CD8-positive, alpha-beta memory T cell (primary cell): ENCODE measurements at regions of chr12 and their contacts with region 1.

Region 1: DNA sequence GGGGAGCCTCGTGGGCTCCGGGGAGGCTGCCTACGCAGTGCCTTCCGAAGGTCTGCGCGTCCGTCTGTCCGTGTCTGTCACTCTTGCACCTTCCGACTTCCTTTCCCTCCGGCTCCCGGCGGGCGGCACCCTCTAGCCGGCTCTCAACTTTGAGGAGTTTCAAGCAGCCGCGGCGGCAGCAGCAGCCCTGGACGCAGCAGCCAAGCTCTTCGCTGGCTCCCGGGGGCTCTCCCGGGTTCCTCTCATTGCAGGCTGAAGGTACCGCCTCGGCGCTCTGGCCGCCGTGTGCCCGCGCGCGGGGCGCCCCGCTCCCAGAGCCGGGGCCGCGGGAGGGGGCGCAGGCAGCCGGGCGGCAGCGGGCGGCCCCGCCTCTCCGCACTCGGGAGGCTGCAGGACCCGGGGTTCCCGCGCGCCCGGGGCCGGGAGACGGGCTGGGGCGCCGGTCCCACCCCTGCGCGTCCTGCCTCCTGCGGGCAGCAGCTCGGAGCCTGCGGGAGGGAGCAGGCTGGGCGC is at the starts of genes AMIGO2 and PCED1B:
- DNase-seq: peak; percentile 44 to 77 (median 52)
- H3K4me3 ChIP-seq: peak within 1 kb of the TSS; percentile 89
- H3K4me3 Mint-ChIP-seq: peak within 1 kb of the TSS; percentile 91 to 97 (median 95)
- H3K27ac ChIP-seq: peak within 1 kb of the TSS; percentile 83
- H3K27ac Mint-ChIP-seq: peak within 1 kb of the TSS; percentile 87 to 99 (median 97)
- H3K4me1 ChIP-seq: peaks cover 58% of the 10 kb centered on the region
- H3K4me1 Mint-ChIP-seq: peaks cover 74 to 79% (median 79%) of the 10 kb centered on the region in 3 donors
- H3K27me3 ChIP-seq: no peaks in the 10 kb centered on the region
- H3K27me3 Mint-ChIP-seq: peaks cover 0 to 5% of the 10 kb centered on the region in 2 donors
- total RNA-seq, gene AMIGO2: 16.2 to 16.6 TPM
- total RNA-seq, gene PCED1B: 52.8 to 56.9 TPM

Region 2: DNA sequence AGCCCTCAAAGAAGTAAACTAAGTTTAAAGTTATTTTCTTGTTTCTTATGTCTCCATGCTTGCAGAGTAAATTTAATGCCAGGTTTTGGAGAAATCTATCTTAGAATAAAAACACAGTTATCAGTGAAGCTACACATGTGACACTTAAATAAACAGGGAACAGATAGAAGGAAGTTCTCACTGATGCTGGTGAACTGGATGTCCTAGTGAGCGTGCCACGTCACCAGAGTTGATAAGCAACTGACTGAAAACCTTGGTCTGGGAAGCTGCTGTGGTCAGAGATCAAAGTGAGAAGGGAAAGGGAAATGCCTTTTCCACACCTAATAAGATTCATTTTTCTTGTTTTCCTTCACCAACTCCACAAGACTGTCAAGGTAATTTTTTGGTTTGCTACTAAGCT is 74.9 kb before region 1 on chr12:
- CTCF ChIA-PET with region 1: no interaction called
- POLR2A ChIA-PET with region 1: no interaction called
- DNase-seq: no peak
- H3K4me3 ChIP-seq: no peak overlapping the region
- H3K4me3 Mint-ChIP-seq: no peak overlapping the region
- H3K27ac ChIP-seq: no peak overlapping the region
- H3K27ac Mint-ChIP-seq: no peak overlapping the region
- H3K4me1 ChIP-seq: no peaks in the 10 kb centered on the region
- H3K4me1 Mint-ChIP-seq: no peaks in the 10 kb centered on the region
- H3K27me3 ChIP-seq: no peaks in the 10 kb centered on the region
- H3K27me3 Mint-ChIP-seq: peaks cover 8 to 61% of the 10 kb centered on the region in 2 donors

Region 3: GRCh38 chr12:47121146-47121545 is 41.6 kb after region 1 on chr12:
- CTCF ChIA-PET with region 1: no interaction called
- POLR2A ChIA-PET with region 1: no interaction called
- DNase-seq: no peak
- H3K4me3 ChIP-seq: no peak overlapping the region
- H3K4me3 Mint-ChIP-seq: no peak overlapping the region
- H3K27ac ChIP-seq: no peak overlapping the region
- H3K27ac Mint-ChIP-seq: no peak overlapping the region
- H3K4me1 ChIP-seq: no peaks in the 10 kb centered on the region
- H3K4me1 Mint-ChIP-seq: peaks cover 9 to 26% (median 23%) of the 10 kb centered on the region in 3 donors
- H3K27me3 ChIP-seq: no peaks in the 10 kb centered on the region
- H3K27me3 Mint-ChIP-seq: no peaks in the 10 kb centered on the region

Region 4: GRCh38 chr12:47190271-47190750 is 110.8 kb after region 1 on chr12:
- CTCF ChIA-PET with region 1: interaction called, 11 read pairs
- POLR2A ChIA-PET with region 1: interaction called, 18 read pairs
- DNase-seq: no peak
- H3K4me3 ChIP-seq: peak overlapping the region; percentile 11
- H3K4me3 Mint-ChIP-seq: peak overlapping the region; percentile 12 to 90 (median 59)
- H3K27ac ChIP-seq: no peak overlapping the region
- H3K27ac Mint-ChIP-seq: peak overlapping the region; percentile 93 to 97 (median 96)
- H3K4me1 ChIP-seq: peaks cover 81% of the 10 kb centered on the region
- H3K4me1 Mint-ChIP-seq: peaks cover 78 to 92% (median 89%) of the 10 kb centered on the region in 3 donors
- H3K27me3 ChIP-seq: no peaks in the 10 kb centered on the region
- H3K27me3 Mint-ChIP-seq: peaks cover 0 to 2% of the 10 kb centered on the region in 2 donors

Region 5: DNA sequence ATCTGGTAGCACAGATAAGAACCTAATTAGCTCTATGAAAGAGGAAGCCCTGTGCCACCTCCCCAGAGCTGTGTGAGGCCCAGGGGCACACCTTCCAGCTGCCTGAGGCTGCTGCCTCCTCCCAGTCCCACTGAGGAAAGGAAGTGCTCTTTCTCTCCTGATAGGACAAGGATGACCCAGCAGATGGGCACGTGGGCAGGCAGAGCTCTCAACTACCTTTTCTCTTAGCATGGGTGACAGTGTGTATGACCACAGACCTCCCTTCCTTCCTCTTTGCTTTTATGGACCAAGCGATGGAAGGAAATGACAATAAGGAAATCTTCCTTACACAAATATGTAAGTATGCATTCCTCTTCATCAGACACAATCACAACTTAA is 127.8 kb after region 1 on chr12:
- CTCF ChIA-PET with region 1: interaction called, 17 read pairs
- POLR2A ChIA-PET with region 1: interaction called, 16 read pairs
- DNase-seq: peak; percentile 34 to 60 (median 50)
- H3K4me3 ChIP-seq: peak overlapping the region; percentile 44
- H3K4me3 Mint-ChIP-seq: peak overlapping the region; percentile 58 to 95 (median 78)
- H3K27ac ChIP-seq: peak overlapping the region; percentile 21
- H3K27ac Mint-ChIP-seq: peak overlapping the region; percentile 86 to 98 (median 94)
- H3K4me1 ChIP-seq: peaks cover 67% of the 10 kb centered on the region
- H3K4me1 Mint-ChIP-seq: peaks cover 77 to 90% (median 84%) of the 10 kb centered on the region in 3 donors
- H3K27me3 ChIP-seq: no peaks in the 10 kb centered on the region
- H3K27me3 Mint-ChIP-seq: peaks cover 0 to 2% of the 10 kb centered on the region in 2 donors

Region 6: GRCh38 chr12:47216150-47216677 is 136.7 kb after region 1 on chr12:
- CTCF ChIA-PET with region 1: interaction called, 6 read pairs
- POLR2A ChIA-PET with region 1: interaction called, 45 read pairs
- DNase-seq: peak; percentile 50 to 84 (median 75)
- H3K4me3 ChIP-seq: peak overlapping the region; percentile 92
- H3K4me3 Mint-ChIP-seq: peak overlapping the region; percentile 89 to 95 (median 94)
- H3K27ac ChIP-seq: peak overlapping the region; percentile 85
- H3K27ac Mint-ChIP-seq: peak overlapping the region; percentile 87 to 100 (median 94)
- H3K4me1 ChIP-seq: peaks cover 8% of the 10 kb centered on the region
- H3K4me1 Mint-ChIP-seq: peaks cover 17 to 43% (median 37%) of the 10 kb centered on the region in 3 donors
- H3K27me3 ChIP-seq: no peaks in the 10 kb centered on the region
- H3K27me3 Mint-ChIP-seq: peaks cover 0 to 2% of the 10 kb centered on the region in 2 donors

Region 7: GRCh38 chr12:47307680-47308399 is 228.3 kb after region 1 on chr12:
- CTCF ChIA-PET with region 1: interaction called, 10 read pairs
- POLR2A ChIA-PET with region 1: interaction called, 10 read pairs
- DNase-seq: peak in 3 of 5 donors; percentile 56 to 72 (median 57)
- H3K4me3 ChIP-seq: peak overlapping the region; percentile 67
- H3K4me3 Mint-ChIP-seq: peak overlapping the region; percentile 29 to 92 (median 86)
- H3K27ac ChIP-seq: no peak overlapping the region
- H3K27ac Mint-ChIP-seq: peak overlapping the region; percentile 62 to 93 (median 90)
- H3K4me1 ChIP-seq: peaks cover 14% of the 10 kb centered on the region
- H3K4me1 Mint-ChIP-seq: peaks cover 36 to 48% (median 41%) of the 10 kb centered on the region in 3 donors
- H3K27me3 ChIP-seq: no peaks in the 10 kb centered on the region
- H3K27me3 Mint-ChIP-seq: no peaks in the 10 kb centered on the region